HCT116 (cell line): ENCODE measurements at regions of chr1 and their contacts with region 1.

Region 1: GRCh38 chr1:185156854-185157598 is at the starts of genes SWT1 and TRMT1L:
- DNase-seq: peak; percentile 96
- ATAC-seq: peak; percentile 94
- H3K4me3 ChIP-seq: peak within 1 kb of the TSS; percentile 76 to 88
- H3K27ac ChIP-seq: peak within 1 kb of the TSS; percentile 76
- H3K4me1 ChIP-seq: peaks cover 0 to 19% of the 10 kb centered on the region in 2 experiments; a peak in 2 of 4 replicates
- H3K27me3 ChIP-seq: no peaks in the 10 kb centered on the region
- CTCF ChIP-seq: no peak
- POLR2A ChIP-seq: peak; percentile 90
- RAD21 ChIP-seq: no peak
- total RNA-seq, gene SWT1: 3.3 TPM
- total RNA-seq, gene TRMT1L: 28.3 TPM

Region 2: GRCh38 chr1:184649451-184649888 is 507.6 kb before region 1 on chr1:
- CTCF ChIA-PET with region 1: no interaction called
- POLR2A ChIA-PET with region 1: no interaction called
- RAD21 ChIA-PET with region 1: no interaction called
- intact Hi-C with region 1: no loop called
- DNase-seq: no peak
- ATAC-seq: no peak
- H3K4me3 ChIP-seq: no peak overlapping the region
- H3K27ac ChIP-seq: no peak overlapping the region
- H3K4me1 ChIP-seq: no peaks in the 10 kb centered on the region
- H3K27me3 ChIP-seq: no peaks in the 10 kb centered on the region
- CTCF ChIP-seq: no peak
- POLR2A ChIP-seq: no peak
- RAD21 ChIP-seq: no peak

Region 3: GRCh38 chr1:184754476-184755225 is 402.4 kb before region 1 on chr1 and contains the start of gene EDEM3:
- CTCF ChIA-PET with region 1: no interaction called
- POLR2A ChIA-PET with region 1: no interaction called
- RAD21 ChIA-PET with region 1: no interaction called
- intact Hi-C with region 1: loop called (anchors 2 kb)
- DNase-seq: peak; percentile 97
- ATAC-seq: peak; percentile 97
- H3K4me3 ChIP-seq: peak within 1 kb of the TSS; percentile 78 to 81
- H3K27ac ChIP-seq: peak within 1 kb of the TSS; percentile 72
- H3K4me1 ChIP-seq: peaks cover 4 to 14% of the 10 kb centered on the region in 2 experiments; a peak in 3 of 4 replicates
- H3K27me3 ChIP-seq: no peaks in the 10 kb centered on the region
- CTCF ChIP-seq: no peak
- POLR2A ChIP-seq: peak; percentile 45
- RAD21 ChIP-seq: no peak
- total RNA-seq, gene EDEM3: 14.9 TPM

Region 4: DNA sequence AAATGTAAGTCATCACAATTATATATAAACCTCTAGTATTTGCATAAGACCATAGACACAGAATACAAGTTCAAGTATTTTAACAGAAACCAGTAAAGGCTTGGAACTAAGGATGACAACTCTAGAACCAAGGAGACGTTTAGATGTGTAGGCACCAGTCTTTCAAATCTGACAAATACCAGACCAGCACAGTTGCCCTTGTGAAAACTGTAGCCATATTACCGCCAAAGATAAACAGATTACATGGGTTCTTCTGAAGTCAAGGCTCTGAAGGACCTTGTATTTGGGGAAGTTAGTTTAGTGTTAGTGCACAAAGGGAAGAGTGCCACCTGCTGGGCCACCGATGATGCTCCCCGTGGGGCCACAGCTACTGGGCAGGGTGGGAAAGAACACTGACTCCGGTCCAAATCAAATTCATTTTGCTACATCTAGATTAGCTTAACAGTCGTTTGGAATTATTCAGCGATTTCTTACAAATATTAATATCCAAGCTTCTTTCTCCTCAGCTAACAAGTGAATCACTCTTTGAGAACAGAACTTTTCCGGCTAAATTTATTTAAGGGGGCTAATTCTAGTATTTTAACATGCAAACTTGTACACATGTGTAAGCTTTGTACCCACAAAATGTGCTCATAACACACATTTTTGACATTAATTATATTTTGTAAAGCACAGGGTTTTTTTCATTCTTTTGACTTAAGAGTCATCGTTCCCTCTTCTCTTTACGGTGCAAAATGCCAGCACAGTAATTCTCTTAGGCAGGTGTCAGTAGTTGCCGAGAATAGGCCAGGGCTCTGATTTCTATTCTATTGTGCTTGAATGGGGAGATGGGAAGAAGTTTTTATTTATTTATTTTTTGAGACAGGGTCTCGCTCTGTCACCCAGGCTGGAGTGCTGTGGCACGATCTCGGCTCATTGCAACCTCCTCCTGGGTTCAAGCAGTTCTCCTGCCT is 174.7 kb before region 1 on chr1:
- CTCF ChIA-PET with region 1: no interaction called
- POLR2A ChIA-PET with region 1: no interaction called
- RAD21 ChIA-PET with region 1: no interaction called
- intact Hi-C with region 1: loop called (anchors 5 kb)
- DNase-seq: peak; percentile 37
- ATAC-seq: peak; percentile 99
- H3K4me3 ChIP-seq: no peak overlapping the region
- H3K27ac ChIP-seq: no peak overlapping the region
- H3K4me1 ChIP-seq: no peaks in the 10 kb centered on the region
- H3K27me3 ChIP-seq: no peaks in the 10 kb centered on the region
- CTCF ChIP-seq: peak; percentile 67 to 86 (median 85)
- POLR2A ChIP-seq: no peak
- RAD21 ChIP-seq: peak; percentile 87

Region 5: DNA sequence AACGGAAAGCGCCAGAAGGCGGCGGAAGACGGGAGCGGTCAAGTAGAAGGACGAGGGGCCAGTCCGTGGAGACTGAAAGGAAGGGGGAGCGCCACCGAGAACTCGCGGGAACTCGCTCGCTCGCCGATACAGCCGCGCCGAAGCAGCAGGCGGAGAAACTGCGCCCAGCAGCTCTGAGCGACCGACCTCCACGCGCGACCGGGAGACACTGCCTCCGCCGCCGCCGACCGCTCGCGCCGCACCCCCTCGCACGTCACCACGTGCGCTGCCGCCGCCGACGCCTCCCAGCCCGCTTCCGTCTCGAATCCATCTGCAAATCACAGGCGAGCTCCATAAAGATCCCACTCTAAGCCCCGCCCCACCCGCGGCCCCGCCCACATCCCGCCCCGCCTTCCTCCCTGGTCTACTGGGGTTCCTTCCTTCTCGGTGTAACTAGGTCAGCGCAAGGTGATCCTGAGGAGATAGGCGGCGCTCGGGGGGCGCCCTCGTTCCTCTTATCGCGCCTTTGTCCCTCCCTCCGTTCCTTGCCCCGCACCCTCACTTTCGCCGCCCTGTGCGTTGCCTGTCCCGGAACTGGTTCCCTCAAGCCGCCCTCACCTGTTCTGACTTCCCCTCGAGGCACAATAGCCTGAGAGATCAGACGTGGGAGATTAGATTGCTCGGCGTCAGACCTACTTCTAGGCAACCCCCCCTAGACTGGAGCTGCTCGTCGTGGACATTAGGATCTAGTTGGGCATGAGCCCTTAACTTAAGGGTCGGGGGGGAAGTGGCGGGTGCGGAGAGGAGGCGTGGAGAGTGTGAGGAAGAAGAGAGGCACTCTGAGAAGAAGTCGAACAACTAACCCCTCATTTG is 160.2 kb after region 1 on chr1 and contains the start of gene IVNS1ABP:
- CTCF ChIA-PET with region 1: no interaction called
- POLR2A ChIA-PET with region 1: no interaction called
- RAD21 ChIA-PET with region 1: no interaction called
- intact Hi-C with region 1: loop called (anchors 10 kb)
- DNase-seq: peak; percentile 85
- ATAC-seq: peak; percentile 82
- H3K4me3 ChIP-seq: peak within 1 kb of the TSS; percentile 81 to 88
- H3K27ac ChIP-seq: peak within 1 kb of the TSS; percentile 92
- H3K4me1 ChIP-seq: peaks cover 8 to 27% of the 10 kb centered on the region in 2 experiments; a peak in 3 of 4 replicates
- H3K27me3 ChIP-seq: no peaks in the 10 kb centered on the region
- CTCF ChIP-seq: peak; percentile 13 to 24 (median 20); a peak in 2 of 6 replicates
- POLR2A ChIP-seq: peak; percentile 64
- RAD21 ChIP-seq: peak; percentile 67
- total RNA-seq, gene IVNS1ABP: 57.9 TPM